Pancreas (tissue), 10 donors: ENCODE measurements at regions of chr17 and their contacts with region 1.

Region 1: GRCh38 chr17:8447799-8448198 is 12.1 kb downstream of the NDEL1 start:
- DNase-seq: no peak
- ATAC-seq: no peak
- H3K4me3 ChIP-seq: no peak overlapping the region
- H3K27ac ChIP-seq: no peak overlapping the region
- H3K4me1 ChIP-seq: no peaks in the 10 kb centered on the region
- H3K27me3 ChIP-seq: no peaks in the 10 kb centered on the region
- CTCF ChIP-seq: no peak

Region 2: GRCh38 chr17:8503368-8503767 is 55.6 kb after region 1 on chr17:
- intact Hi-C with region 1: loop called in 1 of 3 experiments (anchors 10 kb)
- DNase-seq: no peak
- ATAC-seq: peak in 2 of 4 donors; percentile 19 to 32
- H3K4me3 ChIP-seq: no peak overlapping the region
- H3K27ac ChIP-seq: no peak overlapping the region
- H3K4me1 ChIP-seq: no peaks in the 10 kb centered on the region
- H3K27me3 ChIP-seq: no peaks in the 10 kb centered on the region
- CTCF ChIP-seq: no peak

Region 3: GRCh38 chr17:8532021-8532420 is 84.2 kb after region 1 on chr17:
- intact Hi-C with region 1: no loop called
- DNase-seq: peak in 4 of 6 donors; percentile 32 to 49 (median 48)
- ATAC-seq: peak; percentile 96 to 99 (median 98)
- H3K4me3 ChIP-seq: no peak overlapping the region
- H3K27ac ChIP-seq: no peak overlapping the region
- H3K4me1 ChIP-seq: peaks cover 0 to 13% (median 8%) of the 10 kb centered on the region in 3 donors
- H3K27me3 ChIP-seq: peaks cover 0 to 37% (median 0%) of the 10 kb centered on the region in 4 donors
- CTCF ChIP-seq: no peak